WTC11 (cell line): ENCODE measurements at regions of chr9 and their contacts with region 1.

Region 1: DNA sequence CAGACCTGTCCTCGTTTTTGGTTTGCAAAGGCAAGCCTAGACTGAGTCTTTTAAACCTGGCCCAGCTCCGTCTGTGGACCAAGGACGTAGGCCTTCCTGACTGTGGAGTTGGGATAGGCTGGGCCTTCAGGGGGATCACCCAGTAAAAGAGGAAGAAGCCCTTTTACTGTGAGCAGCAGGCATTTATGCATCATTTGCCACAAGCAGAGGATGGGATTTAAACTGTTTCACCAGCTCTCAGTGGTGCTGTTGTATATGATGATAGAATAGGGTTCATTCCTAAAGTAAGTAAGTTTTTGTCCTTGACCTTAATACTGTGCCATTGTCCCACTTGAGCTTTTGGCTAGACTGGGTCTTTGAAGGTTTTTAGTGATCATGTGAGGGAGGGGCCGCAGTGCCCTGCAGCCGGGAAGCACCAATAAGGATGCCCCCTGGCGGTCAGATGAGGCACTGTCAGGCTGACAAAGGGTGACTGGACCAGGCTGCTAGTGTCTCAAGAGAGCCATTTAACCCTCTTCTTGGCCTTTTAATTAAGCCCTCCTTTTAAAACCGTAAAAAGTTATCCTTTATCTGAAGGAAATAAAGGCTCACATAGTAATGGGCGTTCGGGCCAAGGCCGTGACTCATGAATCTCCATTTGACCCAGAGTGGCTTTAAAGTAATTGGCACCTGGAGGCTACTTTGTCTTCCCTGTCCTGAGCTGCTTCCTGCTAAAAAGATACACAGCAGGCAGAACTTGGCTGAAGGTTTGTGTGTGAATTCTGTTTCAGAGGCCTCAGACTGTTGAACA is 74.0 kb downstream of the UBAP1 start:
- DNase-seq: peak; percentile 81
- ATAC-seq: peak; percentile 77
- H3K4me3 Mint-ChIP-seq: no peak overlapping the region
- H3K27ac Mint-ChIP-seq: no peak overlapping the region
- H3K4me1 Mint-ChIP-seq: no peaks in the 10 kb centered on the region
- H3K27me3 Mint-ChIP-seq: no peaks in the 10 kb centered on the region
- CTCF ChIP-seq: peak; percentile 86

Region 2: DNA sequence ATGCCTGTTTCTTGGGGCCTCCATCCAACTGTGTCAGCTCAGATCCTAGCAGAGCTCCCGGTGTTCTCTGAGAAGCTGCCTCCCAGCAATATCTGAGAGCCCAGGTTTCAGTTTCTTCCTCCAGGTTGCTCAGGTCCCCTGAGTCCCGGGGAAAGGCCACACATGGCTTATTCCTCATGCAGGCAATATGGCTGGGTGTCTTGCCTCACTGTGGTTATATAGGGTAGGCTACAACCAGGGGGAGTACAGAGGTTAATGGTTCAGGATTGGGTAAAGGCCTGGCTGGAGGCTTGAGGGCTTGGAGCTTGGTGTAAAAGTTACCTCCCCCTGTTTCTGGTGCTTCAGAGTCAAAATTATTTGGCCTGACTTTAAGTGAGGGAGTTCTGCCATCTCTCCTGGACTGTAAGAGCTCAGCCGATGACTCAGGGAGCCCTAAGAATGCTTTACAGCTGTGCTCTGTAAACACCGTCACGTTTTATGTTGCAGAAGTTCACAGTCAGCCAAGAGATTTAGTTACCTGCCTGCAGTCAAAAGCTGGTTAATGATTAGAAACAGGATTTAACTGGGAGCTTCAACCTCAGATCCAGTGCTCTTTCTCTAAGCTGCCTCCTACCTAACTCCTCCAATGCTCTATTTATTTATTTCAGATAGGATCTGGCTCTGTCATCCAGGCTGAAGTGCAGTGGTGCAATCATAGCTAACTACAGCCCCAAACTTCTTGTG is 179.8 kb before region 1 on chr9:
- CTCF ChIA-PET with region 1: interaction called, 16 read pairs
- POLR2A ChIA-PET with region 1: no interaction called
- DNase-seq: no peak
- ATAC-seq: peak; percentile 16
- H3K4me3 Mint-ChIP-seq: no peak overlapping the region
- H3K27ac Mint-ChIP-seq: peak overlapping the region; percentile 80
- H3K4me1 Mint-ChIP-seq: peaks cover 25% of the 10 kb centered on the region
- H3K27me3 Mint-ChIP-seq: no peaks in the 10 kb centered on the region
- CTCF ChIP-seq: no peak

Region 3: DNA sequence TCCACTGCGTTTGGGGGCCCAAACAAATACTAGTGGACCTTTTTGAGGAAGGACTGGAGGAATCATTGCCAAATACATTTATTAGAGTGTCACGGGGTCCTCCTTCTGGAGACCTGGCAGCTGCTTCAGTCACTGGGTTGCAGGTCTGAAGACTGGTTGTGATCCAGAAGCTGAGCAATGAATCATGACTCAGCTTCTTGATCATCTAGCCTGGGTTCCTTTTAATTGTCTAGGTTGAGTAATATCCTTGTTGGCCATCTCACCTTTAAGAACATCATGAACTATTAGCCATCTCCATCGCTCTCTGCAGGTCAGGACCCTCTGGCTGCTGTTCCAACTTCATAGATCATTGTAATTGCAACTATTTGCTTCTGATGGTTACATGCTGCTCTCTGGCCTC is 89.4 kb before region 1 on chr9:
- CTCF ChIA-PET with region 1: no interaction called
- POLR2A ChIA-PET with region 1: no interaction called
- DNase-seq: no peak
- ATAC-seq: no peak
- H3K4me3 Mint-ChIP-seq: no peak overlapping the region
- H3K27ac Mint-ChIP-seq: no peak overlapping the region
- H3K4me1 Mint-ChIP-seq: no peaks in the 10 kb centered on the region
- H3K27me3 Mint-ChIP-seq: no peaks in the 10 kb centered on the region; the same call in 1 of the 2 replicates
- CTCF ChIP-seq: no peak

Region 4: GRCh38 chr9:34178520-34179212 is 74.2 kb before region 1 on chr9 and contains the start of gene UBAP1:
- CTCF ChIA-PET with region 1: interaction called, 11 read pairs
- POLR2A ChIA-PET with region 1: no interaction called
- DNase-seq: peak; percentile 97
- ATAC-seq: peak; percentile 89
- H3K4me3 Mint-ChIP-seq: peak within 1 kb of the TSS; percentile 91
- H3K27ac Mint-ChIP-seq: peak within 1 kb of the TSS; percentile 96
- H3K4me1 Mint-ChIP-seq: 0 out of 2 replicates have a peak, but pooled peaks cover 5% of the 10 kb centered on the region
- H3K27me3 Mint-ChIP-seq: no peaks in the 10 kb centered on the region
- CTCF ChIP-seq: no peak
- total RNA-seq, gene UBAP1: 23.9 to 26.3 TPM (median 25.7 TPM) in 3 replicates

Region 5: DNA sequence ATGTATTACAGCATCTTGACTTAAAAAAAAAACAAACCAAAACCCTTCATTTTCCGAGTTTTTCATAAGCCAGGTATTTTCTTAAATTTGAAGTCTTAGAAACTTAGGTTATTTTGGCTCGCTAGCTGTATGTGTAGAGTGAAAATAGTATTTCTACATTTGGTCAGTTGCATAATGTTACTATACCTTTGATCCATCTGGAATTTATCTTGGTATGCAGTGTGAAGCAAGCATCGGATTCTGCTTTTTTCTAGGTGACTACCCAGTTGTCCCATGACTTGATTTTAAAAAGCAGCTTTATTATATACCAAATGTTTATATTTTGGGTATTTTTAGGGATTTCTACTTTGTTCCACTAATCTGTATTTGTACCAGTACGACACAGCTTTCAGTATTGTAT is 46.3 kb before region 1 on chr9:
- CTCF ChIA-PET with region 1: no interaction called
- POLR2A ChIA-PET with region 1: no interaction called
- DNase-seq: no peak
- ATAC-seq: no peak
- H3K4me3 Mint-ChIP-seq: no peak overlapping the region
- H3K27ac Mint-ChIP-seq: no peak overlapping the region
- H3K4me1 Mint-ChIP-seq: no peaks in the 10 kb centered on the region; the same call in 1 of the 2 replicates
- H3K27me3 Mint-ChIP-seq: no peaks in the 10 kb centered on the region
- CTCF ChIP-seq: no peak

Region 6: GRCh38 chr9:34262939-34263338 is 10.1 kb after region 1 on chr9:
- CTCF ChIA-PET with region 1: interaction called, 27 read pairs
- POLR2A ChIA-PET with region 1: no interaction called
- DNase-seq: no peak
- ATAC-seq: no peak
- H3K4me3 Mint-ChIP-seq: no peak overlapping the region
- H3K27ac Mint-ChIP-seq: no peak overlapping the region
- H3K4me1 Mint-ChIP-seq: no peaks in the 10 kb centered on the region
- H3K27me3 Mint-ChIP-seq: no peaks in the 10 kb centered on the region
- CTCF ChIP-seq: no peak

Region 7: GRCh38 chr9:34310205-34310604 is 57.3 kb after region 1 on chr9:
- CTCF ChIA-PET with region 1: no interaction called
- POLR2A ChIA-PET with region 1: no interaction called
- DNase-seq: no peak
- ATAC-seq: no peak
- H3K4me3 Mint-ChIP-seq: no peak overlapping the region
- H3K27ac Mint-ChIP-seq: no peak overlapping the region
- H3K4me1 Mint-ChIP-seq: no peaks in the 10 kb centered on the region
- H3K27me3 Mint-ChIP-seq: no peaks in the 10 kb centered on the region
- CTCF ChIP-seq: no peak

Region 8: GRCh38 chr9:34376596-34377403 is 123.9 kb after region 1 on chr9 and contains the start of gene MYORG:
- CTCF ChIA-PET with region 1: interaction called, 33 read pairs
- POLR2A ChIA-PET with region 1: interaction called, 4 read pairs
- DNase-seq: peak; percentile 99
- ATAC-seq: peak; percentile 75
- H3K4me3 Mint-ChIP-seq: peak within 1 kb of the TSS; percentile 93
- H3K27ac Mint-ChIP-seq: peak within 1 kb of the TSS; percentile 82
- H3K4me1 Mint-ChIP-seq: peaks cover 36% of the 10 kb centered on the region
- H3K27me3 Mint-ChIP-seq: peaks cover 32% of the 10 kb centered on the region
- CTCF ChIP-seq: no peak
- total RNA-seq, gene MYORG: 9.3 to 18.9 TPM (median 9.7 TPM) in 3 replicates

Region 9: DNA sequence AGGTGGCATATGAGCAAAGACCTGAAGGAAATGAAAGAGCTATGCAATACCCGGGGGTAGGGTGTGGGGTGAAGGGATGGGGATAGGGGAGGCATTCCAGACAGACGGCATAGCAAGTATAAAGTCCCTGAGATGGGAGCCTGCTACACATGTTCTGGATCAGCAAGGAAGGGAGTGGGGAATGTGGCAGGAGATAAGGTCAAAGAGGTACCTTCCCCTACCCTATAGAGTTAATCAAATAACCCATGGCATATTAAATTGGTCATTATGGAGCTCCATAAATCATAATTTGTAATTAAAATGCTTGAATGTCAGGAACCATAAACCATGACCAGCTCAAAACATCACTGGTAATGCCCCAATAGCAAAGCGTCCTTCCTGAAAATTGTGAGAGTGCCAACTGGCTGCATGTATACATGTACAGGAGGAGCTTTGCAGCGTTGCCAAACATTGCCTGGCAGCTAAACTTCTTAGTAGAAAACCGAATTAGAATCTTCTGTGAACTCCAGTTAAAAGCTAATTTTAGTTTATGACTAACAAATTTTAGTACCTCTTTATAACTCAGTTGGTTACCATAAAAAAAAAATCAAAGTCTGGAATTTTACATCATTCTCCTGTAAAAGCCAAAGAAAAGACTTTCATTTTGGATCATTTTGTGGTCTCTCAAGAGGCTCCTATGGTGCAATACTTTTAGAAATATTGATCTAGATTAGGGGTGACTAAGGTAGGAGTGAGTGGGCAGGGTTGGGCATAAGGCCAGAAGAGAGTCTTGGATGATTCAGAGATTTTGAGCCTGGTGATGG is 210.4 kb after region 1 on chr9:
- CTCF ChIA-PET with region 1: no interaction called
- POLR2A ChIA-PET with region 1: no interaction called
- DNase-seq: no peak
- ATAC-seq: no peak
- H3K4me3 Mint-ChIP-seq: no peak overlapping the region
- H3K27ac Mint-ChIP-seq: no peak overlapping the region
- H3K4me1 Mint-ChIP-seq: peaks cover 21% of the 10 kb centered on the region
- H3K27me3 Mint-ChIP-seq: peaks cover 17% of the 10 kb centered on the region
- CTCF ChIP-seq: no peak